GM13976 (cell line): ENCODE measurements at regions of chr10 and their contacts with region 1.

Region 1: GRCh38 chr10:129971381-129972144 is 7.5 kb upstream of the EBF3 start:
- DNase-seq: peak; percentile 87
- CTCF ChIP-seq: peak; percentile 62

Region 2: GRCh38 chr10:129030996-129031843 is 940.3 kb before region 1 on chr10:
- in situ Hi-C with region 1: loop called (anchors 25 kb)
- DNase-seq: peak; percentile 79
- CTCF ChIP-seq: peak; percentile 85

Region 3: GRCh38 chr10:129416956-129417765 is 554.4 kb before region 1 on chr10:
- in situ Hi-C with region 1: no loop called
- DNase-seq: no peak
- CTCF ChIP-seq: no peak

Region 4: DNA sequence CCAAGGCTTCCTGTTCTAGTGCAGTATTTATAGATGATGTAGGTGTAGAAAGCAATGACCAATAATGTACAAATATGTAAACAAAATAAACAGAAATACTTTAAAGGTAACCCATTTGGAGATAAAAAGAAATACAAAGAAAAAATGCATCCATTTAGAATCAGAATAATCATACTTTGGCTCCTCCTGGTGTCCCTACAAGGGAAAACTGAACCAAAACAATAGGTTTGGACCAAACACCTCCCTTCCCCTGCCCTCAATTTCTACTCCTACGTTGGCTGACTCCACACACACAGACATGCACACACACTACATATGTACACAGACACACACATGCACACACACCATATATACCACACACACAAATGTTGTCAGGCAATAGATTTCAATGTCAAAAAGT is 103.1 kb after region 1 on chr10:
- in situ Hi-C with region 1: no loop called
- DNase-seq: no peak
- CTCF ChIP-seq: no peak